Activated CD8-positive, alpha-beta memory T cell treated with anti-CD3 and anti-CD28 coated beads, Interleukin-2, amount 10 ng/mL, durations not matched to agents 7 days and 5 days (primary cell): ENCODE measurements at regions of chr16 and their contacts with region 1.

Region 1: GRCh38 chr16:52191531-52192134 is 355.3 kb downstream of the TOX3 start:
- DNase-seq: peak; percentile 56
- ATAC-seq: no peak
- H3K4me3 Mint-ChIP-seq: no peak overlapping the region
- H3K27ac Mint-ChIP-seq: no peak overlapping the region
- H3K4me1 Mint-ChIP-seq: no peaks in the 10 kb centered on the region
- H3K27me3 Mint-ChIP-seq: no peaks in the 10 kb centered on the region

Region 2: GRCh38 chr16:52068447-52069074 is 123.1 kb before region 1 on chr16:
- CTCF ChIA-PET with region 1: no interaction called
- DNase-seq: no peak
- ATAC-seq: no peak
- H3K4me3 Mint-ChIP-seq: no peak overlapping the region
- H3K27ac Mint-ChIP-seq: no peak overlapping the region
- H3K4me1 Mint-ChIP-seq: no peaks in the 10 kb centered on the region
- H3K27me3 Mint-ChIP-seq: no peaks in the 10 kb centered on the region

Region 3: GRCh38 chr16:52912565-52913173 is 721.0 kb after region 1 on chr16:
- CTCF ChIA-PET with region 1: interaction called, 22 read pairs
- DNase-seq: peak; percentile 57
- ATAC-seq: no peak
- H3K4me3 Mint-ChIP-seq: no peak overlapping the region
- H3K27ac Mint-ChIP-seq: no peak overlapping the region
- H3K4me1 Mint-ChIP-seq: no peaks in the 10 kb centered on the region
- H3K27me3 Mint-ChIP-seq: no peaks in the 10 kb centered on the region